SK-N-SH (cell line): ENCODE measurements at regions of chr2 and their contacts with region 1.

Region 1: GRCh38 chr2:20661067-20661980 is 5.6 kb upstream of the GDF7 start:
- DNase-seq: peak; percentile 88
- H3K4me3 ChIP-seq: peak overlapping the region in 1 of 2 experiments; percentile 5; a peak in 1 of 4 replicates
- H3K27ac ChIP-seq: no peak overlapping the region
- H3K4me1 ChIP-seq: peaks cover 0 to 10% of the 10 kb centered on the region in 2 experiments; a peak in 2 of 4 replicates
- H3K27me3 ChIP-seq: peaks cover 71% of the 10 kb centered on the region
- CTCF ChIP-seq: peak; percentile 99
- EP300 ChIP-seq: 0 out of 4 replicates have a peak, but pooled peaks of 1 of the 2 experiments have one; percentile 23
- RAD21 ChIP-seq: peak; percentile 99

Region 2: DNA sequence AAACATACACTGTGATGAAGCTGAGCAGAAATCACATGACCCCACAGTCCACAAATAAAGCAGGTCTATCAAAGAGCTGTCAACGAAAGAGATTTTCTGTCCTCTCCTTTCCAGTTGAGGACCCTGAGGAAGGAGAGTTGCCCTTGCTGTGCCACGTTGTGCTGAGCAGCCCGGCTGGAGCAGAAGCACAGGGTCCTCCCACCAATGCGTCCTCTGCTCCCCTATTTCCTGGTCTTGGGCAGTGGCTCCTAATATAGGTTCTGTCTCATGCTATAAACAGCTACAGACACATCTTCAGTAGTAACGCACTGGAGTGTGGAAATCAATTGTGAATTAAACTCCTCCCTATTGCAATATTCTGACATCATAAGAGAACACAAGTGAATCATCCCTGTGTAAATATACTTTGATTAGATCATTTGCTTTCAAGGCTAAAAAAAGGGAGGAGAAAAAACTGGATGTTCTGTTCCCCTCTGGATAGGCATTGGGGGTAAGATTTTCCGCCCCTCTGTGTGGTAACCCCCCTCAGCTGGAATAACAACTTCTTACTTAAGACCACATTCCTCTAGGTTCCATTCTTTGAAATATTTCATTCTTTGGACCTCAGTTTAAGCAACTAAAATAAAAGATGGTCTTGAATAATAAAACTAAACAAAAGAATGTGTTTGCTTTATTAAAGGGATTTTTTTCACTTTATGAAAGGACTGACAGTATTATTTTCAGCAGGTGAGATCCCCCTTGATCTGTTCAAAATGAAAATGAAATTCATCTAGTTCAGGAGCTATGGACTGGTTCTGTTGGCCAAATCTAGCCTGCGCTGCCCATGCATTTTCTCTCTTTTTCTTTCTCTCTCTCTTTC is 222.8 kb before region 1 on chr2:
- CTCF ChIA-PET with region 1: interaction called, 11 read pairs
- POLR2A ChIA-PET with region 1: no interaction called
- DNase-seq: no peak
- H3K4me3 ChIP-seq: no peak overlapping the region
- H3K27ac ChIP-seq: peak overlapping the region in 1 of 2 experiments; percentile 6; a peak in 1 of 4 replicates
- H3K4me1 ChIP-seq: peaks cover 2 to 6% of the 10 kb centered on the region in 2 experiments; a peak in 2 of 4 replicates
- H3K27me3 ChIP-seq: no peaks in the 10 kb centered on the region; the same call in 1 of the 2 replicates
- CTCF ChIP-seq: no peak
- EP300 ChIP-seq: no peak
- RAD21 ChIP-seq: no peak

Region 3: DNA sequence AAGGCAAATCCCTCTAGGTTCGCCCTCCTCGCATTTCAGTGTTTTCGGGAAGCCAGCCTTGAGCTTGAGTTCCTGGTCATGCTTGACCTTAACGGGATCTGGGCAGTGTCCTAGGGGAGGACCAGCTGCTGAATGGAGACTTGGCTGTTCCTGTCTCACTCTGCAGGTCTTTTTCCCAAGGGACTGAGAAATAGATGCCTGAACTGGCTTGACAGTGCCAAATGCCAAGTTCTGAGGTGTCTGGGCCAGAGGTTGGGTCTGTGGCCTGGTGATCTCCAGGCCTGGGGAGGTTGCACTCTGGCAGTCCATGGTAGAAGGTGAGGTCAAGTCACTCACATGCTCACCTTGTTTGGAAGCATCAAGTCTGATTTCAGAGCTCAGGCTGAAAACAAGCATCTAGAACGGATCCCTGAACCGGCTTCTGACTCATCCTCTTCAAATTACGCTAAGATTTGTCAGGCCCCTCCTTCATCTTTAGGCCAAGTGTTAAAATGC is 194.9 kb before region 1 on chr2:
- CTCF ChIA-PET with region 1: no interaction called
- POLR2A ChIA-PET with region 1: no interaction called
- DNase-seq: peak; percentile 47
- H3K4me3 ChIP-seq: no peak overlapping the region
- H3K27ac ChIP-seq: peak overlapping the region in 1 of 2 experiments; percentile 85; a peak in 3 of 4 replicates
- H3K4me1 ChIP-seq: peaks cover 0 to 24% of the 10 kb centered on the region in 2 experiments; a peak in 2 of 4 replicates
- H3K27me3 ChIP-seq: no peaks in the 10 kb centered on the region
- CTCF ChIP-seq: no peak
- EP300 ChIP-seq: no peak
- RAD21 ChIP-seq: no peak

Region 4: DNA sequence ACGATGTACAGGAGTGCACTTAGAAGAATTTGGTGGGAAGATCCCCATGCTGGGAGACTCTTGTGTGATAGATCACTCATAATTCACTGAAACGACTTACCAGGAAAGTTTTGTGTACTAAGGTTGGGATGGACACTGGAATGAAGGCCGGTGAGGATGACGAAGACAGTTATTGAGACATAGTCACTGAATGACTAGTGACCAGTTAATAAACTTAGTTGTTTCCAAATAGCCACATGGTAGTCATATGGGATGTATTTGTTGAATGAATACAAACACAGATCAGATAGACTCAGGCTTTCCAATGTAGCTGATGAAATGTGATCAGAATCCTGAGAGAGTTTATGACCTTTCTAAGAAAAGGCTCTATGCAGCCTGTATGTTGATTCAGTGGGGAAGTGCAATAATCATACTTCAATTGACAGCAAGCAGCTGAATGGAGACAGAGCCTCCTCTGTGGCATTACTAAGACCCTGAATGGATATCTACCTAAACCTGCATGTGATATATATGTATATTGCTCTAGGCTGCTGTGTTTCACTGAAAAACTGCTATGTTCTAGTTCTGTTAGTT is 26.0 kb after region 1 on chr2:
- CTCF ChIA-PET with region 1: interaction called, 34 read pairs
- POLR2A ChIA-PET with region 1: no interaction called
- DNase-seq: no peak
- H3K4me3 ChIP-seq: no peak overlapping the region
- H3K27ac ChIP-seq: no peak overlapping the region
- H3K4me1 ChIP-seq: no peaks in the 10 kb centered on the region
- H3K27me3 ChIP-seq: no peaks in the 10 kb centered on the region
- CTCF ChIP-seq: no peak
- EP300 ChIP-seq: no peak
- RAD21 ChIP-seq: no peak

Region 5: DNA sequence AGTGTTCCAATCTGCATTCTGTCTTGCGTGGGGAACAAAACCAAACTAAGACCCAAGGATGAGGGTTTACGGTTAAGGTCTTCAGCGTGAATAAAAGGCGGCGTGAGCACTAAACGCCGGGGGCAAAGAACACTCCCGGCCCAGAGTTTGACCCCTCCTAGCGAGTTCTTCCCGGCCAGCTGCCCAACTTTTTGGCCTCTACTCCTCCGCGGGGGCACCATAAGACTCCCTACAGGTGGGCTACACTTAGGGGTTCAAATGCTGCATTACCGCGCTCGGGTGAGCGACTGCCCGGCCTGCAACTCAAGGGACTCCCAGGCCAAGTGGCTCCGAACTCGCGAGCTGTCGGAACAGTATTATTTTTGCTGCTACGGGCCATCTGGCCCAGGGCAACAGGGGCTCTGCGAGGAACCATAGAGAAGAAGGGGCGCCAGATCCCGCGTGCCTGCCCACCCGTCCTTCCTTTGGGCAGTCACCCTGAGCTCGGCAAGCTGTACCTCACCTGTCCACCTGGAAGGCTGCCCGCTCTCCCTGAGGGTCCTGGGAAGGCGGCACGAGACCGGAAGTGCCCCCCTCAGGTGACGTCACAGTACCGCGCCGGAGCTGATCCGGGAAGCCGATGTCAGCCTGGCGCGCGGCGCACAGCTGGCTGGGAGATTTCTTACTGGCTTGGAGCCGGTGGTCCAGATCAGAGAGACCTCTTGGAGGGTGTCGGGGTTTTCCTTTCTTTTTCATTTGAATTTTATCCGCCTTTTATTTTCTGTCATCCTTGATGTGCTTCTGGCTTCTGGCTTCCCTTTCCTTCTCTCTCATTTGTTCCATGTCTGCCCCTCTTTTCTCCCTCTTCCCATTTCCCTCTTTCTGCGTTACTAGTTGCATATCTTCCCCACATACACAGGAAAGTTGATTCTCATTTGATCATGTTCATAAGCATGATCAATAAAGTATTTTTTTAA is 161.5 kb after region 1 on chr2 and contains the start of gene LDAH:
- CTCF ChIA-PET with region 1: interaction called, 15 read pairs
- POLR2A ChIA-PET with region 1: interaction called, 5 read pairs
- DNase-seq: peak; percentile 98
- H3K4me3 ChIP-seq: peak within 1 kb of the TSS; percentile 94 to 100
- H3K27ac ChIP-seq: peak within 1 kb of the TSS; percentile 91 to 95
- H3K4me1 ChIP-seq: no peaks in the 10 kb centered on the region
- H3K27me3 ChIP-seq: no peaks in the 10 kb centered on the region
- CTCF ChIP-seq: no peak
- EP300 ChIP-seq: peak; percentile 25 to 31; a peak in 2 of 4 replicates
- RAD21 ChIP-seq: peak; percentile 17
- polyA plus RNA-seq, gene LDAH: 12.7 and 13.9 TPM in 2 replicates

Region 6: GRCh38 chr2:20946468-20946867 is 285.1 kb after region 1 on chr2:
- CTCF ChIA-PET with region 1: interaction called, 41 read pairs
- POLR2A ChIA-PET with region 1: no interaction called
- DNase-seq: no peak
- H3K4me3 ChIP-seq: no peak overlapping the region
- H3K27ac ChIP-seq: no peak overlapping the region
- H3K4me1 ChIP-seq: no peaks in the 10 kb centered on the region
- H3K27me3 ChIP-seq: peaks cover 12% of the 10 kb centered on the region; the same call in 1 of the 2 replicates
- CTCF ChIP-seq: no peak
- EP300 ChIP-seq: no peak
- RAD21 ChIP-seq: no peak

Region 7: DNA sequence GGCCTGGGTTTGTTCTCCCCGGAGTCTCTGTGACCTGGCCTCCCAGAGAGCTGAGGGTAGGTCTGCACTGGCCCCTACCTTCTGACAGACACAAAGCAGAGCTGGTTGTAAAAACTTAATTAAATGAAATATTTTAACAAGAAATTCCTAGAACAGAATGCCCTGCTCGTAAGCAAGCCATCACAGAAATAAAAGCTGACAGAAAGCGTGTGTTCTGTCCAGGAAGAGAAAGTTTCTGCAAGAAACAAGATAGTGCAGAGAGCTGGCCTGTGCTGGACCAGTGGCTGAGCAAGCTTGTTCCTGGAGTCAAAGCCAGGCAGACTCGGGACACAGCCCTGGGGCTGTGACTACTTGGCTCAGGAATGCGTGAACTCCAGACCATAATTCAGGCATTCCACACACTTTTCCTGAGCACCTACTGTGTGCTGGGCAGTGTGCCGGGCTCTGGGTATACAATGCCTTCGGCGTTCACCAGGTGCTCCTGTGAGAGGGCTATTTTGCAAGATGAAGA is 330.9 kb after region 1 on chr2:
- CTCF ChIA-PET with region 1: interaction called, 40 read pairs
- POLR2A ChIA-PET with region 1: no interaction called
- DNase-seq: no peak
- H3K4me3 ChIP-seq: no peak overlapping the region
- H3K27ac ChIP-seq: no peak overlapping the region
- H3K4me1 ChIP-seq: peaks cover 0 to 44% of the 10 kb centered on the region in 2 experiments; a peak in 2 of 4 replicates
- H3K27me3 ChIP-seq: no peaks in the 10 kb centered on the region
- CTCF ChIP-seq: no peak
- EP300 ChIP-seq: peak; percentile 9 to 11; a peak in 1 of 4 replicates
- RAD21 ChIP-seq: no peak

Region 8: GRCh38 chr2:21118302-21118920 is 457.1 kb after region 1 on chr2:
- CTCF ChIA-PET with region 1: interaction called, 79 read pairs
- POLR2A ChIA-PET with region 1: no interaction called
- DNase-seq: peak; percentile 75
- H3K4me3 ChIP-seq: no peak overlapping the region
- H3K27ac ChIP-seq: no peak overlapping the region
- H3K4me1 ChIP-seq: no peaks in the 10 kb centered on the region
- H3K27me3 ChIP-seq: no peaks in the 10 kb centered on the region
- CTCF ChIP-seq: peak; percentile 70
- EP300 ChIP-seq: no peak
- RAD21 ChIP-seq: peak; percentile 97